ENCODE measurements at regions of chr15 and their contacts with region 1.

Region 1: DNA sequence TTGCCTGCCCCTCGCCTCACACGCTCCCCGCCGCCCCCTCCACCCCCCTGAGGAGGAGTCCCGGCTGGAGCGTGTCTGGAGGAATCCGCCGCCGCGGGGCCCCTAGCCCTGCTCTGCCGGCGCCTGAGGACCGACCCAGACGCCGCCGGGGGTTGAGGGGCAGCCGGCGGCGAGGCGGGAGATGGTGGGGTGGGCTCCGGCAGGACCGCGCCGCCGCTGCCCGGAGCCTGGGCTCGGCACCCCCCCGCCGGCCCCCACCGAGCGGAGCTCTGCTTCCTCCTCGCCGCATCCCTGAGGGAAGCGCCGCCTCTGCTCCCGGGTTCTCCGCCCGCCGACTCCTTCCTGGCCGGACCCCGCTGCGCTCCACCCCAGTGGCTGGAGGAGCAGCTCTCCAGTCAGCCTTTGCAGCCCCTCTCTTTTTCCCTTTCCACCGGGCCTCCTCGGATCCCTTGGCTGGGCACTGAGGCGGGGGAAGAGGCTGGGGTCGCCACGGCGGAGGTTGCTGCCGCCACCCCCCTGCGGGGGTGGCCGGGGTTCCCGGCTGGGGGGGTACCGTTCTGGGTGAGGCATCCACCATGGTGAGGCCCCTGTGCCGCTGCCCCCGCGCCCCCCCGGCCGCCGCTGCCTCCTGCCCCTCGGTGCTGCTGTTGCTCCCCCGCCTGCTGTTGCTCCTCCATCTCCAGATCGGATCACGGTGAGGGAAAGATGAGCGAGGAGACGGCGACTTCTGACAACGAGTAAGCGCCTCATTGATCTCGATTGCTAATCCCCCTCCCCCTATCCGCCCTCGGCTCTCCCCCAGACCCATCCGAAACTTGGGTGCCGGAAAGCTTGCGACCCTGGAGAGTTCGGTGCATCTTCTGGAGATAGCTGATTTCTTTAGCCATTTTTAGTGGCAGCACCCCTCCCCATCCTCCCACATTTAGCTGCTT is at the start of gene SPRED1:
- DNase-seq: peak; percentile 86 to 90 (median 86)
- ATAC-seq: peak; percentile 29 to 83 (median 71)
- H3K4me3 ChIP-seq: peak within 1 kb of the TSS; percentile 78 to 97 (median 85)
- H3K27ac ChIP-seq: peak within 1 kb of the TSS; percentile 96 to 100 (median 99)
- H3K4me1 ChIP-seq: peaks cover 0 to 41% (median 33%) of the 10 kb centered on the region in 12 donors
- H3K27me3 ChIP-seq: no peaks in the 10 kb centered on the region
- CTCF ChIP-seq: no peak
- POLR2A ChIP-seq: no peak
- total RNA-seq, gene SPRED1: 6.1 to 34.8 (median 10.9) TPM

Region 2: DNA sequence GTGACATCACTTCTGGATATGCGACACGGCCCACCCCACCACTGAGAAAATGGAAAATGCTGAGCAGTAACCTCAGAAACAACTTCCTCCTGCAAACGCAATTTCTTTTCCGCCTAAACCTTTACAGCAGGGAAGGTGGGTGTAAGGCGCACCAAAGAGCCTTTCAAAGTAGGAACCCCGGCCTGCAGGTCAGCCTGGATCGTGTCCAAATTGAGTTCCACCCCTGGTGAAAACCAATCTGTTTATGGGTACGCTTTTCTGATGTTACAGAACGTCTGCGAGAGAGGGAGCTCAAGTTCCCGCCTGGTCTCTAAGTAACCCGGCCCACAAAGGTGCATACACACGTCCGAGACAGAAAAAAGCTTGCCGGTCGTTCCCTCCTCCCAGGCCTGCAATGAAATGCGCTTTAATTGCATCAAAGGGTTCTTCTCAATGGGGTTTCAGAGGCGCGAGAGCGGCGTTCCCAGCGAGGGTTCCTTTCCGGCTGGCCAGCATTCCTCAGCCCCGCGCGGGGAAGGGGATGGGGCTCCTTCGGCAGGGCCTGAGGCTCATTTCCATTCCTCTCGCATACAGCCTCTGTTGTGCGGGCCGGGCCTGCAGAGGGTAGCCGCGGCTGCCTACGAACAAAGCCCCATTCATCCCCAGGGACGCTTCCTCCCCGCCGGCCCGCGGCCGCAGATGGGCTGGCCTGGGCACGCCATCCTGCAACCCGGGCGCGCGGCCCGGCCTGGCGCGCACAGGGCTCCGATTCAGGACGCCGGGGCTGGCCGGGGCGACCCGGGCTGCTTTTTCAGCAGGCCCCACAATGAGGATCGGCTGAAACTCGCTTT is 180.2 kb before region 1 on chr15:
- intact Hi-C with region 1: loop called in 9 of 10 experiments (anchors 2 to 10 kb)
- DNase-seq: peak; percentile 73 to 87 (median 76)
- ATAC-seq: peak; percentile 74 to 94 (median 90)
- H3K4me3 ChIP-seq: peak overlapping the region; percentile 18 to 88 (median 64)
- H3K27ac ChIP-seq: peak overlapping the region; percentile 74 to 95 (median 90)
- H3K4me1 ChIP-seq: peaks cover 0 to 58% (median 27%) of the 10 kb centered on the region in 12 donors
- H3K27me3 ChIP-seq: no peaks in the 10 kb centered on the region
- CTCF ChIP-seq: peak in 7 of 12 donors; percentile 9 to 39 (median 23)
- POLR2A ChIP-seq: no peak

Region 3: GRCh38 chr15:38129531-38130204 is 123.1 kb before region 1 on chr15:
- intact Hi-C with region 1: loop called in 1 of 10 experiments (anchors 5 kb)
- DNase-seq: peak in 4 of 5 donors; percentile 72 to 86 (median 76)
- ATAC-seq: peak; percentile 75 to 89 (median 85)
- H3K4me3 ChIP-seq: peak overlapping the region in 9 of 12 donors; percentile 15 to 45 (median 26)
- H3K27ac ChIP-seq: peak overlapping the region; percentile 20 to 94 (median 79)
- H3K4me1 ChIP-seq: peaks cover 0 to 63% (median 17%) of the 10 kb centered on the region in 12 donors
- H3K27me3 ChIP-seq: no peaks in the 10 kb centered on the region
- CTCF ChIP-seq: no peak
- POLR2A ChIP-seq: peak in 1 of 2 donors; percentile 20

Region 4: DNA sequence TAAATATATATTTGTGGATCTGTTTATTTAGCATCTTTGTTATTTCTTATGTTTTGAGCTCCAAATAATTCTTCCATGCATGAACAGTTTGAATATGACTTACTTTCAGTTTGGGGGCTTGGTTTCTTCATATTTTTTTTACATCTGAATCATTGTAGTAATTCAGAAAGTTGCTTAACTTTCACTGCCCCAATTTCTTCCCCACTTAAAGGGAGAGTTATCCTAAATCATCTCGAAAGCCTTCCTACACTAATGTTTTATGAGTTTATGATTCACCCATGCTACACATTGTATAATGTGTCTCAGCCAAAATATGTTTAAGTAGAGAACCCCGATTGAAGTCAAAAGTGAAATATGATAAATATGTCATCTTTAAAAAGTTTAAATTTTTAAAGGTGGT is 47.6 kb after region 1 on chr15:
- intact Hi-C with region 1: loop called in 1 of 10 experiments (anchors 10 kb)
- DNase-seq: no peak
- ATAC-seq: no peak
- H3K4me3 ChIP-seq: no peak overlapping the region
- H3K27ac ChIP-seq: no peak overlapping the region
- H3K4me1 ChIP-seq: peaks cover 0 to 59% (median 9%) of the 10 kb centered on the region in 12 donors
- H3K27me3 ChIP-seq: no peaks in the 10 kb centered on the region
- CTCF ChIP-seq: no peak
- POLR2A ChIP-seq: no peak

Region 5: GRCh38 chr15:38354315-38354929 is 101.7 kb after region 1 on chr15:
- intact Hi-C with region 1: loop called in 8 of 10 experiments (anchors 2 to 10 kb)
- DNase-seq: peak in 4 of 5 donors; percentile 43 to 61 (median 58)
- ATAC-seq: peak; percentile 37 to 72 (median 61)
- H3K4me3 ChIP-seq: no peak overlapping the region
- H3K27ac ChIP-seq: no peak overlapping the region
- H3K4me1 ChIP-seq: peaks cover 0 to 11% (median 0%) of the 10 kb centered on the region in 12 donors
- H3K27me3 ChIP-seq: no peaks in the 10 kb centered on the region
- CTCF ChIP-seq: peak; percentile 66 to 92 (median 81)
- POLR2A ChIP-seq: no peak

Region 6: GRCh38 chr15:38398134-38398533 is 145.4 kb after region 1 on chr15:
- intact Hi-C with region 1: no loop called
- DNase-seq: peak in 2 of 5 donors; percentile 38 to 68
- ATAC-seq: peak; percentile 84 to 97 (median 90)
- H3K4me3 ChIP-seq: no peak overlapping the region
- H3K27ac ChIP-seq: peak overlapping the region in 6 of 12 donors; percentile 9 to 57 (median 38)
- H3K4me1 ChIP-seq: peaks cover 0 to 19% (median 6%) of the 10 kb centered on the region in 12 donors
- H3K27me3 ChIP-seq: no peaks in the 10 kb centered on the region
- CTCF ChIP-seq: no peak
- POLR2A ChIP-seq: no peak

Measured in heart left ventricle (tissue), 16 donors.